ENCODE measurements at regions of chr15 and their contacts with region 1.

Region 1: DNA sequence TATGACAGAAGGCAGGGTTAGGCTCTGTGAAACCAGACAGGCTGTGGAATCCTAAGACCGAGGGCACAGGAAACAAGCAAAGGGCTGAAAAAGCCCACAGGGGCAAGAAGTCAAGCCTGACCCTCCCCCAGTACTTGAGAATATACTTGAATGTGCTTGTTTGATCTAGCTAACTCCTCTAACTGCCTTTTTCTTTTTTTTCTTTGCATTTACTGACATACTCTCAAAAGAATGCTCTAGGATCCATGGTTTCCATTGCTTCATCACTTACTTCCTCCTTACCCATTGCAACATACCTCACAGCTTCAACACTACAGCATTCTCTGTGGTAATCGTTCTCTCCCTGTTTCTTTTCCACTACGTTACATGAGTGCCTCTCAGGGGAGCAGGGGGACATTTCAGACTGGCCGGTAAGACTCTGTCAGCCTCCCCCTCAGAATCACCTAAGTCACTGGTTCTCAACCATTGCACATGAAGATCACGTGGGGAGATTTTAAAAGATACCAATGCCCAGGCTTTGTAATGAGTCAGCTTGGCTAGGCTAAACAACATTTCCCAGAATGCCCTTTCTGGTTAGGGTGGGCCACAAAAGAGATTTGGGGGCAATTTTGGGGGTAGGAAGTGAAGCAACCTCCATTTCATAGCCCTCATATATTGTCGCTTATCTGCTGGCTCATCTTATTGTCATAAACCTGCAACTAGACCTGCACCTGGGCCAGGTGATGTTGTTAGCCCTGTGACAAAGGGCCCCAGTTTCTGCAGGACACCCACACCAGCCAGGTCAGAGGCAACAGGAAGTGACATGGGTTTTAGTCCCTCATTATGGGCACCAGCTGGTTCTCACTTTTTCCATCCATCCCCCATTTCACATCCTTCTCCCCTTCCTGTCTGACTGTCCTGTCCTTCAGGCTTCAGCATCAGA is 24.6 kb upstream of the RSL24D1 start:
- DNase-seq: no peak
- H3K4me3 ChIP-seq: peak overlapping the region in 1 of 8 donors; percentile 50
- H3K27ac ChIP-seq: peak overlapping the region; percentile 29 to 93 (median 76)
- H3K4me1 ChIP-seq: peaks cover 22 to 95% (median 71%) of the 10 kb centered on the region in 6 donors
- H3K27me3 ChIP-seq: no peaks in the 10 kb centered on the region
- CTCF ChIP-seq: no peak
- POLR2A ChIP-seq: no peak

Region 2: GRCh38 chr15:55290528-55291057 is 69.2 kb after region 1 on chr15:
- intact Hi-C with region 1: loop called (anchors 2 kb)
- DNase-seq: peak; percentile 97
- H3K4me3 ChIP-seq: peak overlapping the region; percentile 58 to 96 (median 86)
- H3K27ac ChIP-seq: peak overlapping the region; percentile 79 to 98 (median 94)
- H3K4me1 ChIP-seq: peaks cover 0 to 60% (median 32%) of the 10 kb centered on the region in 6 donors
- H3K27me3 ChIP-seq: no peaks in the 10 kb centered on the region
- CTCF ChIP-seq: peak; percentile 80 to 95 (median 91)
- POLR2A ChIP-seq: no peak

Measured in spleen (tissue), 13 donors.